CD8-positive, alpha-beta T cell (primary cell): ENCODE measurements at regions of chr10 and their contacts with region 1.

Region 1: GRCh38 chr10:12348870-12349628 is at the start of gene CAMK1D:
- DNase-seq: peak; percentile 81 to 96 (median 91)
- ATAC-seq: peak; percentile 65
- H3K4me3 ChIP-seq: peak within 1 kb of the TSS; percentile 67 to 84
- H3K4me3 Mint-ChIP-seq: peak within 1 kb of the TSS; percentile 98
- H3K27ac ChIP-seq: peak within 1 kb of the TSS; percentile 59 to 77
- H3K27ac Mint-ChIP-seq: peak within 1 kb of the TSS; percentile 98
- H3K4me1 ChIP-seq: peaks cover 23% of the 10 kb centered on the region
- H3K4me1 Mint-ChIP-seq: peaks cover 40% of the 10 kb centered on the region
- H3K27me3 ChIP-seq: no peaks in the 10 kb centered on the region
- H3K27me3 Mint-ChIP-seq: no peaks in the 10 kb centered on the region
- CTCF ChIP-seq: no peak
- total RNA-seq, gene CAMK1D: 24.6 to 25.7 TPM

Region 2: DNA sequence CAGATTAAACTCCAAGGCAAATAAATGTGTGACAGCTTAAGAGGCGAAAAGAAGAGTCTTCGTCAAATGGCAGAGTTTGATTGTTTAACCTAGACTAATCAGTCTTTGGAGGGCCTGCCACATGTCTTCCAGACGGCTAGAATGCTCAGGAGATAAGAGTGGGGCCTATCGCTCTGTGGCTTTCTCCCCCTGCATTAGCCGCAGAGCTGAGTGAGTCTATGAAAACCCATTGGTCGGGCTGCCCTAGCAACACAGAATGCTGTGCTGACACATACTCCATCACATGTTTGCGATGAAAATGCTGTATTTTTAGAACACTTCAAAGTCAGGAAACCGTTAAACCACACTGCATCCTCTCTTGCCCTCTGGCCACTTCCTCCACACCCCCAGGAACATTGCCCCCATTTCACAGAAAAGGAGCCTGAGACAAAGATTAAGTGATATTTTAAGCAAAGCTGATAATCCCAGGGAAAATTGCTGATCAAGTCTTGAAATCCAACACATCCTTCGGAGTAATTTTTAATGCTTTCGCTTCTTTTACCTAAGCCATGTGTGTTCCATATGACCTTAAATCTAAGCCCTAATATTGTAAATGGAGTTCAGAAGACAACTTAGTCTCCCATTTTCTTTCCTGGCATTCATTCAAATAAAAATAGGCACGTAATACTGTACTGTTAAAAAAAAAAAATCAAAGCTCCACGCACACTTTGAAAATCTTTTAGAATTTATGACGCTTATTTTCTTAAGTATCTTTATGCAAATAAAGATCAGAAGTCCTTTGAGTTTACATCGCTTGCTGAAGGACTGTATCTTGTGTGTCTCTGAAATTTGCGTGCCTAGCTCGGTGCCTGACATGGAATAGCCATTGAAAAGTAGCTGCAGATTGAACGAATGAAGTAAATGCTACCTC is 1170.2 kb before region 1 on chr10:
- CTCF ChIA-PET with region 1: no interaction called
- POLR2A ChIA-PET with region 1: no interaction called
- intact Hi-C with region 1: loop called in 1 of 2 experiments (anchors 5 kb)
- DNase-seq: peak; percentile 66 to 96 (median 85)
- ATAC-seq: peak; percentile 70
- H3K4me3 ChIP-seq: peak overlapping the region; percentile 25 to 40
- H3K4me3 Mint-ChIP-seq: no peak overlapping the region
- H3K27ac ChIP-seq: peak overlapping the region; percentile 48 to 79
- H3K27ac Mint-ChIP-seq: no peak overlapping the region
- H3K4me1 ChIP-seq: peaks cover 100% of the 10 kb centered on the region
- H3K4me1 Mint-ChIP-seq: peaks cover under 1% of the 10 kb centered on the region
- H3K27me3 ChIP-seq: no peaks in the 10 kb centered on the region
- H3K27me3 Mint-ChIP-seq: no peaks in the 10 kb centered on the region
- CTCF ChIP-seq: no peak

Region 3: DNA sequence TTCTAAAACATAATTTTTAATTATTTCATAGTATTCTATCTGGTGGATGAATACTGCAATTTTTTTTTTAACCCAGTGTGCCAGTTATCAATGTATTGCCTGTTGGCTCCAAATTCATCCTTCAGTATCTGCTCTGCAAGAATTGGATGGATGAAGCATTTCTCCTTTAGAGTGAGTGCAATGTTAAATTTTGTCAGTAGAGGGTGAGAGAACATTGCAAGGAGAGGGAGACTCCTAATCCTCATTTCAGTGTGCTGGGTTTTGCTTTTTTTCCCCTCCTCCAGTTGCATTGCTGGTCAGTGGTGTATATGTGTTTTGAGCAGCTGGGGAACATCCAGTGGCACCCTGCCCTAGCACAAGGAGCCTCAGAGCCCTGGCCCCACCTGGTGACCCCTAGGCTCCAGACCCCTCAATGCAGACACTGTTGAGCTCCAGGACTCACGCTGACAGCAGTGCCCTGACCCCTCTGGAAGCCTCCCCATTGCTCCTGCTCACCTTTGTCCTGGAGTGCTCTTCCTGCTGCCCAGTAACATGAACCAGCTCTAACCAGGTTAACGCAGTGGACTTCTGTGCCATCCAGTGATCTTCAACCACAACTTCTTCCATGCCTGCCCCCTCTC is 937.0 kb before region 1 on chr10:
- CTCF ChIA-PET with region 1: no interaction called
- POLR2A ChIA-PET with region 1: no interaction called
- intact Hi-C with region 1: no loop called
- DNase-seq: no peak
- ATAC-seq: no peak
- H3K4me3 ChIP-seq: no peak overlapping the region
- H3K4me3 Mint-ChIP-seq: no peak overlapping the region
- H3K27ac ChIP-seq: no peak overlapping the region
- H3K27ac Mint-ChIP-seq: no peak overlapping the region
- H3K4me1 ChIP-seq: peaks cover 16% of the 10 kb centered on the region
- H3K4me1 Mint-ChIP-seq: peaks cover 30% of the 10 kb centered on the region
- H3K27me3 ChIP-seq: no peaks in the 10 kb centered on the region
- H3K27me3 Mint-ChIP-seq: no peaks in the 10 kb centered on the region
- CTCF ChIP-seq: no peak

Region 4: GRCh38 chr10:12129222-12130111 is 219.6 kb before region 1 on chr10 and contains the start of gene SEC61A2:
- CTCF ChIA-PET with region 1: no interaction called
- POLR2A ChIA-PET with region 1: no interaction called
- intact Hi-C with region 1: loop called in 1 of 2 experiments (anchors 5 kb)
- DNase-seq: peak; percentile 92 to 99 (median 98)
- ATAC-seq: peak; percentile 89
- H3K4me3 ChIP-seq: peak within 1 kb of the TSS; percentile 61 to 78
- H3K4me3 Mint-ChIP-seq: peak within 1 kb of the TSS; percentile 90
- H3K27ac ChIP-seq: peak within 1 kb of the TSS; percentile 71 to 72
- H3K27ac Mint-ChIP-seq: peak within 1 kb of the TSS; percentile 90
- H3K4me1 ChIP-seq: peaks cover 9% of the 10 kb centered on the region
- H3K4me1 Mint-ChIP-seq: peaks cover 17% of the 10 kb centered on the region
- H3K27me3 ChIP-seq: no peaks in the 10 kb centered on the region
- H3K27me3 Mint-ChIP-seq: no peaks in the 10 kb centered on the region
- CTCF ChIP-seq: no peak
- total RNA-seq, gene SEC61A2: 10.2 to 14.5 TPM

Region 5: DNA sequence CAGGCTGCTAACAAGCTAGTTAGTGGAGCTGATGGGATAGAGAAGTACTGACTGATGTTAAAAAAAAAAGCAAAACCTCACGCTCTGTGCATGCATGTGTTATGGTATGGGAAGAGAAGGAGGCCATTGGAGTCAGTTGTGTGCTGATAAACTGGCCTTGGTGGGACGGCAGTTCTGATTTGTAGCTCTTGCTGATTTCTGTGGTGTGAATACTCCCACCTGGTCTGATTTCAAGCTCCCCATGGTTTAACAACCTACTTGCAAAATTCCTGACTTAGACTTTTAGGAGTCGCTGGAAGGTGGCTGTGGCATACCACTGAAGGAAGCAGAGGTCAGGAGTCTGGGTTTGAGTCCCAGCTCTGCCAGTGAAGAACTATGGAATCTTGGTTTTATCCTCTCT is 15.5 kb after region 1 on chr10:
- CTCF ChIA-PET with region 1: interaction called, 9 read pairs
- POLR2A ChIA-PET with region 1: interaction called, 14 read pairs
- intact Hi-C with region 1: no loop called
- DNase-seq: no peak
- ATAC-seq: no peak
- H3K4me3 ChIP-seq: no peak overlapping the region
- H3K4me3 Mint-ChIP-seq: no peak overlapping the region
- H3K27ac ChIP-seq: no peak overlapping the region
- H3K27ac Mint-ChIP-seq: no peak overlapping the region
- H3K4me1 ChIP-seq: peaks cover 12% of the 10 kb centered on the region
- H3K4me1 Mint-ChIP-seq: peaks cover 38% of the 10 kb centered on the region
- H3K27me3 ChIP-seq: no peaks in the 10 kb centered on the region
- H3K27me3 Mint-ChIP-seq: no peaks in the 10 kb centered on the region
- CTCF ChIP-seq: no peak

Region 6: GRCh38 chr10:12605580-12606405 is 256.7 kb after region 1 on chr10:
- CTCF ChIA-PET with region 1: no interaction called
- POLR2A ChIA-PET with region 1: interaction called, 4 read pairs
- intact Hi-C with region 1: loop called in 1 of 2 experiments (anchors 5 kb)
- DNase-seq: peak; percentile 18 to 76 (median 55)
- ATAC-seq: peak; percentile 85
- H3K4me3 ChIP-seq: peak overlapping the region; percentile 46 to 57
- H3K4me3 Mint-ChIP-seq: peak overlapping the region; percentile 93
- H3K27ac ChIP-seq: peak overlapping the region; percentile 70 to 71
- H3K27ac Mint-ChIP-seq: peak overlapping the region; percentile 97
- H3K4me1 ChIP-seq: peaks cover 14% of the 10 kb centered on the region
- H3K4me1 Mint-ChIP-seq: peaks cover 30% of the 10 kb centered on the region
- H3K27me3 ChIP-seq: no peaks in the 10 kb centered on the region
- H3K27me3 Mint-ChIP-seq: no peaks in the 10 kb centered on the region
- CTCF ChIP-seq: no peak

Region 7: DNA sequence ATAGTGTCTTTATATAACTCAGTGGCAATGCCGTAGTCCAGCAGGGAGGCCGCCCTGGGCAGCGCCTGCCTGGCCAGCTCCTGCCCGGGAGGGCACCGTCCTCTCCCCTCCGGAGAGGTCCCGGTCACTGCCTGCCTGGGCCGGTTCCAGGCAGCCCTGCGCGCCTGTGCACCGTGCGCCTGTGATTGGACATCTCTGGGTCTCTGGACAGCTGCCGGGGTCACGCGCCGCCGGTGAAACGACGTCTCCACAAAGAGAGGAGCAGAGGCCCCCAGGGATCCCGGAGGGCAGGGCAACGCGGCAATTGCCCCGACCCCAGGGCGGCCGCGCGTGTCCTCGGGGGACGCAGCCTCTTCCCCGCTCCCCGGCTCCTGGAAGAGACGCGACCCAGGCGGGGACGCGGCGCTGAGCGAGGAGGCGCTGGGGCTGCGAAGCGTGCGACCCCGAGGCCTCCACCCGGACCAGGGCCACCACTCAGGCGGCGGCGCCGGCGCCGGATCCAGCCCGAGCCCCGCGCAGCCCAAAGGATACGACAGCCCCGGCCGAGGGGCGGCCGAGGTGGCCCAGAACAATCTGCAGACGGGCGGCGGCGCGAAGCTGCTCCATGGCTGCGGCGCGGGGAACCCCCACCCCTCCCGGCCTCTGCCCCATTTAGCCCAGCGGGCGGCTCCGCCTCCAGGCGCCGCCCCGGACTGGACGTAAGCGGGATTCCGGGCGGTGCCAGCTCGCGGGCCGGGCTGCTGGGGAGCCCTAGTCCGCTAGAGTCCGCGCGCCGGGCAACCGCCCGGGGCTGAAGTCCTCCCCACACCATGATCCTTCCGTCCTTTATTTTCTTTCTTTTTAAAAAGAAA is 950.6 kb after region 1 on chr10 and contains the start of gene PHYH:
- CTCF ChIA-PET with region 1: no interaction called
- POLR2A ChIA-PET with region 1: no interaction called
- intact Hi-C with region 1: loop called in 1 of 2 experiments (anchors 5 kb)
- DNase-seq: peak; percentile 65 to 93 (median 80)
- ATAC-seq: peak; percentile 52
- H3K4me3 ChIP-seq: peak within 1 kb of the TSS; percentile 68 to 70
- H3K4me3 Mint-ChIP-seq: peak within 1 kb of the TSS; percentile 84
- H3K27ac ChIP-seq: peak within 1 kb of the TSS; percentile 81 to 91
- H3K27ac Mint-ChIP-seq: peak within 1 kb of the TSS; percentile 94
- H3K4me1 ChIP-seq: peaks cover 28% of the 10 kb centered on the region
- H3K4me1 Mint-ChIP-seq: peaks cover 26% of the 10 kb centered on the region
- H3K27me3 ChIP-seq: no peaks in the 10 kb centered on the region
- H3K27me3 Mint-ChIP-seq: no peaks in the 10 kb centered on the region
- CTCF ChIP-seq: no peak
- total RNA-seq, gene PHYH: 12.6 TPM